SK-N-SH (cell line): ENCODE measurements at regions of chr11 and their contacts with region 1.

Region 1: DNA sequence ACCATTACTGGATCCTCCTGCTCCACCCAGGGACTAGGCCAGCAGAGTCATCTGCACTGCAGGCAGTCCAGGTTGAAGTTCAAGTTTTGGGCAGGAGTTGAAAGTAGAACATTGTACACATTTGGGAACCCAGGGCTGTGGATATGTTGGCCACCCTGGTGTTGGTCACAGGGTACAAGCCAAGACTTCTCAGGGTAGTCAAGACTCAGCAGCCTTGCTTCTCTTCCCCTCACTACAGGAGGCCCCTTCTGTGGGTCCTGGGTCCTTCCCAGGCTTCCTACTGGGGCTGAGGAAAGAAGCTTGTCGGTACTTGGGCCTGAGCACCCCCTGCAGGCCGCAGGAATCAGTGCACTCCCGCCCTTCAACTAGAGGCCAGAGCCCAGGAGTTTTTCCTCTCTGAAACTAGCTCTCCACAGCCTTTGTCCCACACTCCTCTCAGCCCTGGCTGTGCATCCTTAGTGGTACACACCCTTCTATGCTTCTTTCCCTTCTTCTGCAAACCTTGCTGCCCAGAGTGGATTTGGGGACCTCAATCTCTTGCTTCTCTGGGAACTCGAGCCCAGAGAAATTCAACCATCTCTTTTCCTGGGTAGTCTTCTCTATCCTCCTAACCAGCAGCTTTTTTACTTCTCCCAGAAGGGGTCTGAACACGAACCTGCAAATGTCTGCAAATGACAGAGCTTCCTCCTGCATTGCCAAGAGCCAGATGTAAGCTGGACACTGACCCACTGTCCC is 2.6 kb upstream of the HPX start:
- DNase-seq: peak; percentile 78
- H3K4me3 ChIP-seq: no peak overlapping the region
- H3K27ac ChIP-seq: no peak overlapping the region
- H3K4me1 ChIP-seq: peaks cover 0 to 18% of the 10 kb centered on the region in 2 experiments; a peak in 1 of 4 replicates
- H3K27me3 ChIP-seq: no peaks in the 10 kb centered on the region
- CTCF ChIP-seq: peak; percentile 77
- EP300 ChIP-seq: no peak
- RAD21 ChIP-seq: peak; percentile 73

Region 2: GRCh38 chr11:6258571-6259081 is 184.8 kb before region 1 on chr11:
- CTCF ChIA-PET with region 1: no interaction called
- POLR2A ChIA-PET with region 1: no interaction called
- DNase-seq: no peak
- H3K4me3 ChIP-seq: peak overlapping the region in 1 of 2 experiments; percentile 4; a peak in 1 of 4 replicates
- H3K27ac ChIP-seq: no peak overlapping the region
- H3K4me1 ChIP-seq: peaks cover 0 to 10% of the 10 kb centered on the region in 2 experiments; a peak in 1 of 4 replicates
- H3K27me3 ChIP-seq: peaks cover 63% of the 10 kb centered on the region
- CTCF ChIP-seq: no peak
- EP300 ChIP-seq: no peak
- RAD21 ChIP-seq: no peak

Region 3: DNA sequence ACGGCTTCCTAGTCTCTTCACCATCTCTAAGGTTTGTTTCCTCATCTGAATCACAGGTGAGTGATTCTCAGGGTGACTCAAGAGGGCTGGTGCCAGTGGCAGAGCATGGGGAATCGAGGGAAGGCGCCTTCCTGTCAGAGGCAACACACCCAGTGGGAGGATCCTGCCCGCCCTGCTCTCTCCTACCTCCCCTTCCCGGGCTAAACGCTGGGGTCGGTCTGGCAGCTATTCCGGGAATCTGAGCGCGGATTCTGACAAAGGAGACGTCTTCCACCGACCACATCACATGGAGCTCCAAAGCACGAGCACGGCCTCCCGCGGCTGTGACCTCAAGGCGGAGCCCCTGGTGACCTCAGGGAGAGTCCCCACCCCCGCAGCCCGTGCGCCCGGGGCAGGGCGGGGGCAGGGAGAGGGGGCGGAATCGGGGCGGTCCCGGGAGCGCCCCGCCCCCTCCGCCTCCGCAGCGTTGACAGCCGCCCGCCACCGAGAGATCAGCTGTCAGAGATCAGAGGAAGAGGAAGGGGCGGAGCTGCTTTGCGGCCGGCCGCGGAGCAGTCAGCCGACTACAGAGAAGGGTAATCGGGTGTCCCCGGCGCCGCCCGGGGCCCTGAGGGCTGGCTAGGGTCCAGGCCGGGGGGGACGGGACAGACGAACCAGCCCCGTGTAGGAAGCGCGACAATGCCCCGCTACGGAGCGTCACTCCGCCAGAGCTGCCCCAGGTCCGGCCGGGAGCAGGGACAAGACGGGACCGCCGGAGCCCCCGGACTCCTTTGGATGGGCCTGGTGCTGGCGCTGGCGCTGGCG is 53.3 kb before region 1 on chr11 and contains the start of gene SMPD1:
- CTCF ChIA-PET with region 1: interaction called, 14 read pairs
- POLR2A ChIA-PET with region 1: no interaction called
- DNase-seq: peak; percentile 97
- H3K4me3 ChIP-seq: peak within 1 kb of the TSS; percentile 89 to 91
- H3K27ac ChIP-seq: peak within 1 kb of the TSS; percentile 54 to 78; a peak in 3 of 4 replicates
- H3K4me1 ChIP-seq: peaks cover 3 to 14% of the 10 kb centered on the region in 2 experiments; a peak in 2 of 4 replicates
- H3K27me3 ChIP-seq: no peaks in the 10 kb centered on the region
- CTCF ChIP-seq: no peak
- EP300 ChIP-seq: no peak
- RAD21 ChIP-seq: no peak
- polyA plus RNA-seq, gene SMPD1: 59.6 and 69.2 TPM in 2 replicates

Region 4: DNA sequence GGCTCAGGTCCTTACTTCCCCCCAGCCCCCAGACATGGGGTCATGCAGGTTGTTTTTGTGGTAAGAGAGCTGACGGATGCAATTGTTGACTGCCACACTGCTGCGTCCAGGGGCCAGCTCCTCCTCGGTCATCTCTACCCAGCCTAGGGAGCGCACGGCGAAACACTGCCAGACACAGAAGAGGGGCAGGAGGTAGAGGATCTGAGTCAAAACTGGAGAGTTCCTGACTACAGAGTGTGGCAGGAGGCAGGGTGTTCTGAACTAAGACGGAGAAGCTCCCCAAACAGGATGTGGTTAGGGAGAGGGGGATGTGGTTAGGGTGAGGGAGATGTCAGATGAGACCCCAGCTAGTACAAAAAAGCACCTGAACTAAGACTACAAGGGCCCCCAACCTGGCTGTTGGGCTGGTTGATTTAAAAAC is 40.9 kb before region 1 on chr11:
- CTCF ChIA-PET with region 1: interaction called, 12 read pairs
- POLR2A ChIA-PET with region 1: no interaction called
- DNase-seq: no peak
- H3K4me3 ChIP-seq: no peak overlapping the region
- H3K27ac ChIP-seq: no peak overlapping the region
- H3K4me1 ChIP-seq: peaks cover 7 to 13% of the 10 kb centered on the region in 2 experiments; a peak in 2 of 4 replicates
- H3K27me3 ChIP-seq: no peaks in the 10 kb centered on the region
- CTCF ChIP-seq: no peak
- EP300 ChIP-seq: no peak
- RAD21 ChIP-seq: no peak

Region 5: DNA sequence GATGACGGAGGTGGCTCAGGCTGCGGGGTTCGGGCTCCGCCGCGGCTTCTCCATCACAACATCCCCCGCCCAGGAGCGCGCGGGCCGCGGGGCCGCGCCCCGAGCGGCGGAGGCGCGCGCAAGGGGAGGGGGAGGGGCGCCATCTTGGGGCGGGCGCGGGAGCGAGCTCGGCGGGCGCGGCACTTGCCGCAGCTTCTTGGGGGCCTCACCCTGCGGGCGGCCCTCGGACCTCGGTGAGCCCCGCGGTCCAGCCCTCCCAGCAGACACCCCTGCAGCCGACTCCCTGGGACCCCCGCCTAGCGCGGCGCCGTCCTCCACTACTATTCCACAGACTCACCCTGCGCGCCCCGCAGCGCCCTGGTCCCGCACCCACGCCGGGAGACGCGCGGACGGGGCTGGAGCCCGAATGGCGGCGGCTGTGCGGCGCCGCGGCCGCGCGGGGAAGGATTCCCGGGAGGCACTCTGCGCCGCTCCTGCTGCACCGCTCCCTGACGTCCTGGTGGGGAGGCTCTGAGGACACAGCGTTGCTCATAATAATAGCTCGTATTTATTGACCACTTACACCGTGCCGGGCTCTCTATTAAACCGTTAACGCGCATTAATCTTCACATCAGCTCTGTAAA is 24.3 kb before region 1 on chr11 and contains the start of gene APBB1:
- CTCF ChIA-PET with region 1: interaction called, 21 read pairs
- POLR2A ChIA-PET with region 1: interaction called, 9 read pairs
- DNase-seq: peak; percentile 96
- H3K4me3 ChIP-seq: peak within 1 kb of the TSS; percentile 74 to 77
- H3K27ac ChIP-seq: peak within 1 kb of the TSS in 1 of 2 experiments; percentile 80; a peak in 2 of 4 replicates
- H3K4me1 ChIP-seq: peaks cover 0 to 11% of the 10 kb centered on the region in 2 experiments; a peak in 1 of 4 replicates
- H3K27me3 ChIP-seq: no peaks in the 10 kb centered on the region
- CTCF ChIP-seq: peak; percentile 19; the same call in 1 of the 2 replicates
- EP300 ChIP-seq: no peak
- RAD21 ChIP-seq: peak; percentile 6; the same call in 1 of the 2 replicates
- polyA plus RNA-seq, gene APBB1: 32.9 and 35.9 TPM in 2 replicates

Region 6: GRCh38 chr11:6431861-6432260 is 11.6 kb before region 1 on chr11:
- CTCF ChIA-PET with region 1: interaction called, 61 read pairs
- POLR2A ChIA-PET with region 1: interaction called, 4 read pairs
- DNase-seq: no peak
- H3K4me3 ChIP-seq: no peak overlapping the region
- H3K27ac ChIP-seq: no peak overlapping the region
- H3K4me1 ChIP-seq: no peaks in the 10 kb centered on the region
- H3K27me3 ChIP-seq: no peaks in the 10 kb centered on the region
- CTCF ChIP-seq: no peak
- EP300 ChIP-seq: peak in 1 of 2 experiments; percentile 40; a peak in 1 of 4 replicates
- RAD21 ChIP-seq: no peak

Region 7: DNA sequence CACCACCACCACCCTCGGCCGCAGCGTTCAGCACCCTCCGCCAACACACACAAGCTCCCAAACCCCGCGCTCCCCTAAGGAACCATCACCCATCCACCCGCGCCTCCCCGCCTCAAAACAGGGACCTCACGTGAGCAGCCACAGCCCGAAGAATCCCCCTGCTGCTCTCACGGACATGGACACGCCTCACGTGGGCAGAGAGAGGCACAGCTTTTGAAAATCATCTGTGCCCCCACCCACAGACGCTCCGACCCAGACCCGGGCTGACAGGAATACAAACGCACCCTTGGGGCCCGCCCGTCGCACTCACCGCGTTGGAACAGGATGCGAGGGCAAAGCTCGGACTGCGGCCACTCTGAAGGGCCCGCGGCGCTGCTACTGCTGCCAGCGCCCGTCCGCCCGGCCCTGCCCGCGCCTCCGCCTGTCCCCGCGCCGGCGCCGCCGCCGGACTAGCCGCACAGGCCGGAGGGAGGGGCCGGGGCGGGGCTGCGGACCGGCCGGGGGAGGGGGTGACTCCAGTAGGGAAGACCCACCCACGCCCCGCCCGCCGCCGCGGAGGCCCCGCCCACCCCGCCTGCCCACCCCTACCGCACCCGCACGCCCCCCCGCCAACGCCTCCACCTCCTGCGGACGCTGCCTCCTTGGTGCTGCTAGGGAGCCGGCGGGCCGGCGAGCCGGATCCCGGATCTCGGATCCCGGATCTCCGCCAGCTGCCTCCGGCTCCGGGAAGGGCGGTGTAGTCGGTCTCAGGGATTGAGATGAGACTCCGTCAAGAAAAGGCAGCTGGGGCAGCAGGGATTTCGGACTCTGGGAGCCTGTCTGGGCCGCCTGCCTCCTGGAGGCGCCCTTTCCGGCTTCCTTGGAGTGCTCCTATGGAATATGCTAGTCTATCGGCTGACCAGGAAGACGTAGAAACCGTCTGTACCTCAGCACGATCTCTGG is 30.3 kb after region 1 on chr11 and contains the start of gene TRIM3:
- CTCF ChIA-PET with region 1: interaction called, 32 read pairs
- POLR2A ChIA-PET with region 1: interaction called, 4 read pairs
- DNase-seq: peak; percentile 100
- H3K4me3 ChIP-seq: peak within 1 kb of the TSS; percentile 63 to 96
- H3K27ac ChIP-seq: peak within 1 kb of the TSS; percentile 93 to 96
- H3K4me1 ChIP-seq: peaks cover 7 to 22% of the 10 kb centered on the region in 2 experiments; a peak in 2 of 4 replicates
- H3K27me3 ChIP-seq: no peaks in the 10 kb centered on the region
- CTCF ChIP-seq: peak; percentile 56
- EP300 ChIP-seq: no peak
- RAD21 ChIP-seq: no peak
- polyA plus RNA-seq, gene TRIM3: 22.8 and 26.6 TPM in 2 replicates

Region 8: DNA sequence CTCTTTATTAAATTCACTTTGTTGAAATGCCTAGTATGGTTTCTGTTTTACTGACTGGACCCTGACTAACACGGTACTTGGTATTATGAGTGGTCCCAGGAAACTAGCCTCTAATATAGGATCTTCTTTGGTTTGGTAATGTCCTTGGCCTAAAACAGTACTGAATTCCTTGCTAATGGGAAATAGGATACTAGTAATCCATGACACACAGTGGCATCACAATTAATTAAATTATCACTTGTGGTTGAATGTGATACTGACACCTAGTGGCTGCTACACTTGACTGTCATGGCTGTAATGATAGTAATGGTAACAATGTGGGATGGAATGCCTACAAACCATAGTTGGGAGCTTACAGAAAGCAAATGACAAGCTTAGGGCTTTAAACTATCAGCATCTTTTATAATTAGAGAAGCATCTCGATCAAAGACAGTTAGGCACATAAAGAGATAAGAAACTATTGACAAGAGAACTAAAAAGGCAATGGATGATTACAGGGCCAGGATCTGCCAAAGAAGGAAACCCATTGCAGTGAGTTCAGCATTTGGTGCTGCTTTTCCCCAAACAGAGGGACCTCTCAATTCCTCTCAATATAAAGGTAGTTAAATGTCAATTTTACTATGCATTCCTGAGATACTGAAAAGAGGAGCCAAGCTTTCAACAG is 62.3 kb after region 1 on chr11:
- CTCF ChIA-PET with region 1: interaction called, 19 read pairs
- POLR2A ChIA-PET with region 1: no interaction called
- DNase-seq: peak; percentile 62
- H3K4me3 ChIP-seq: no peak overlapping the region
- H3K27ac ChIP-seq: peak overlapping the region in 1 of 2 experiments; percentile 24; a peak in 1 of 4 replicates
- H3K4me1 ChIP-seq: 0 out of 4 replicates have a peak, but pooled peaks cover 0 to 4% of the 10 kb centered on the region in 2 experiments
- H3K27me3 ChIP-seq: no peaks in the 10 kb centered on the region
- CTCF ChIP-seq: peak; percentile 76
- EP300 ChIP-seq: no peak
- RAD21 ChIP-seq: peak; percentile 67

Region 9: GRCh38 chr11:6531267-6531752 is 87.9 kb after region 1 on chr11:
- CTCF ChIA-PET with region 1: no interaction called
- POLR2A ChIA-PET with region 1: no interaction called
- DNase-seq: peak; percentile 61
- H3K4me3 ChIP-seq: no peak overlapping the region
- H3K27ac ChIP-seq: no peak overlapping the region
- H3K4me1 ChIP-seq: peaks cover 0 to 3% of the 10 kb centered on the region in 2 experiments; a peak in 2 of 4 replicates
- H3K27me3 ChIP-seq: no peaks in the 10 kb centered on the region
- CTCF ChIP-seq: peak; percentile 91
- EP300 ChIP-seq: no peak
- RAD21 ChIP-seq: peak; percentile 85